A549 (cell line): ENCODE measurements at regions of chr2 and their contacts with region 1.

Region 1: DNA sequence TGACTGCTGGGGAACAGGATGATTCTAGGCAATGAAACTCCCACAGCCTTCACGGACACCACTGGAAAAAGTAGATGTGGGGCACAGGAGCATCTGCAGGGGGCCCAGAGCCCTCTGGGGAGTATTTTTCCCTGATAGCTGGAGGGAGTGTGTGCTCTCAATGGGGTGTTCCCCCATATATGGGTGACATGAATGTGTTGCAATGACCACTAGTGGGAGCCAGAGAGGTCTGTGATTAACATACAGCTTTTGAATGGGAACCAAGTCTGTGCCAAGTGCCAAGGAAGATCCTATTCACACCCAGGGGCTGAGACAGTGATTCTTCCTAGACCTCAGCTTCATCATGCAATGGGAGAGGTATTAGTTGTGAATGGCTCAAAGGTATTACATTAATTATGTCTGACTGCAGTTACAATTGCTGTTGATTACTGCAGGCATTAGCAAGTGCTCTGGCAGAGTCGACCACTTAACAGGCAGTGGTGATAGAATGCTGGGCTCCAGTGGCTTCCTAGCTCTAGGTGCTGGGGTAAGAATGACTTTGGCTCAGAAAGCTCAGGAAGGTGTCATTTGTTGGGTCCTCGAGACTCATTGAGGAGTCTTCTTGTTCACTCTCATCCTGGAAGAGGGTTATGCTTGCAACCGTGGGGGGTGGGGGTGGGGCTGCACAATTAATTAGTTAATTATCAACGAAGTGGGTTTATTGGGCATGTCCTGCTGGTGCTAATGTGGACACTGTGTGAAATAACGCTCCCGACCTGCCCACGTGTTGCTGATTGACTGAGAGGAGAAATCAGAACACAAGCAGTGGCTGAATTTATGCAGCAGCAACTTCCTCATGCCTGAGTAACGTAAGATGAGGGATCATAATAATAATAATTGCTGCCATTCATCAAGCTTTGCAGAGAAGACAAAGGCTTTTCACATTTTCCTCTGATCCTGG is 194.1 kb downstream of the CLIP4 start:
- DNase-seq: peak; percentile 75 to 80
- ATAC-seq: peak; percentile 78 to 95
- H3K4me3 ChIP-seq: no peak overlapping the region
- H3K27ac ChIP-seq: no peak overlapping the region
- H3K4me1 ChIP-seq: 0 out of 3 replicates have a peak, but pooled peaks cover 3% of the 10 kb centered on the region
- CTCF ChIP-seq: peak; percentile 87
- EP300 ChIP-seq: no peak
- POLR2A ChIP-seq: no peak
- RAD21 ChIP-seq: peak; percentile 62 to 65

Region 2: DNA sequence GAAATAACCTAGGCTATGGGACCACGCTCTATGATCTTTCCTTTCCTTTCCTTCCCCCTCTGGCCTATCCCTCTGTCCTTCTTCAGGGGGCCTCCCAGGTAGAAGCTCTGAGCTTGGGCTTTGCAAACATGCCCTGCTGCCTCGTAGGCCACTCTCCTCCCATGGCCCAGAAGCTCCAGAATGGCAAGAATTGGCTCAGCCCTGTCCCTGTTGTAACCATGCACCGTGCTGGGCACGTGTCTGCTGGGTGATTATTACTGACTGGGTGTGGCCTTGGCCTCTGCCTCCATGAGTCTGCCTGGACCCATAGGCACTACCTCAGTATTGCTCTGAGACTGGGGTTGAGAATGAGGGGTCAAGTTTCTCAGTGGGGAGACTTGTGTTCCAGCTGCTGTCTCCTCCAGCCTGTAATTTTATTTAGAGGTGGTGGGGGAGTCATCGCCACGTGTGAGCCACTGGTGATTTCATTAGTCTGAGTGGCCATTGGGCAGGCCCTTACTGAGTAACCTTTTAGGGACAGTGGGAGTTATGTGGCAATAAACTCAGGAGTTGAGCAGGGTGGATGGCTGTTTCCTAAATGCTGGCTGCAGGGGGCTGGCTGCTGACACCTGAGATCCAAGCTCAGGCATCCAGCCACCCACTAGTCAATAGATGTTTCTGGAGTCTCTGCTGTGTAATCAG is 36.2 kb before region 1 on chr2:
- CTCF ChIA-PET with region 1: interaction called, 11 read pairs
- POLR2A ChIA-PET with region 1: no interaction called
- DNase-seq: no peak
- ATAC-seq: no peak
- H3K4me3 ChIP-seq: no peak overlapping the region
- H3K27ac ChIP-seq: no peak overlapping the region
- H3K4me1 ChIP-seq: no peaks in the 10 kb centered on the region
- CTCF ChIP-seq: no peak
- EP300 ChIP-seq: no peak
- POLR2A ChIP-seq: no peak
- RAD21 ChIP-seq: no peak

Region 3: GRCh38 chr2:29290293-29291047 is 18.9 kb before region 1 on chr2:
- CTCF ChIA-PET with region 1: interaction called, 38 read pairs
- POLR2A ChIA-PET with region 1: no interaction called
- DNase-seq: no peak
- ATAC-seq: peak in 1 of 2 experiments; percentile 23; a peak in 1 of 6 replicates
- H3K4me3 ChIP-seq: no peak overlapping the region
- H3K27ac ChIP-seq: no peak overlapping the region
- H3K4me1 ChIP-seq: no peaks in the 10 kb centered on the region
- CTCF ChIP-seq: no peak
- EP300 ChIP-seq: no peak
- POLR2A ChIP-seq: no peak
- RAD21 ChIP-seq: no peak

Region 4: DNA sequence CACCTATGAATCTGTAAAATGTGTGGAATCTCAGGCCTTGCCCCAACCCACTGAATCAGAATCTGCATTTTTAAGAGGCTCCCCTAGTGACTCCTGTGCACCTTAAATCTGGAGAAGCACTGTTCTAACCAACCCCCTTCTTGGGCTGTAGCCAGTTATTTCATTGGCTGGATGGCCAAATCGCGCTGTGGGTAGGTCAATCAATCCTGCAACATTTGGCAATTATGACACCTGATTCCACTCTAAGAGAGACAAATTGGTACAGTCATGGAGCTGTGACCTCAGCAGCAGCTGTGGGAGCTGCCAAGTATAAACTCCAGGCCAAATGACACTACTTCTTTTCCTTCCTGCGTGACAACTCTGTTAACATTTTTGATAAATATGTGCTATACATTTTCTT is 14.6 kb after region 1 on chr2:
- CTCF ChIA-PET with region 1: interaction called, 40 read pairs
- POLR2A ChIA-PET with region 1: no interaction called
- DNase-seq: no peak
- ATAC-seq: no peak
- H3K4me3 ChIP-seq: no peak overlapping the region
- H3K27ac ChIP-seq: no peak overlapping the region
- H3K4me1 ChIP-seq: no peaks in the 10 kb centered on the region
- CTCF ChIP-seq: no peak
- EP300 ChIP-seq: no peak
- POLR2A ChIP-seq: no peak
- RAD21 ChIP-seq: no peak

Region 5: DNA sequence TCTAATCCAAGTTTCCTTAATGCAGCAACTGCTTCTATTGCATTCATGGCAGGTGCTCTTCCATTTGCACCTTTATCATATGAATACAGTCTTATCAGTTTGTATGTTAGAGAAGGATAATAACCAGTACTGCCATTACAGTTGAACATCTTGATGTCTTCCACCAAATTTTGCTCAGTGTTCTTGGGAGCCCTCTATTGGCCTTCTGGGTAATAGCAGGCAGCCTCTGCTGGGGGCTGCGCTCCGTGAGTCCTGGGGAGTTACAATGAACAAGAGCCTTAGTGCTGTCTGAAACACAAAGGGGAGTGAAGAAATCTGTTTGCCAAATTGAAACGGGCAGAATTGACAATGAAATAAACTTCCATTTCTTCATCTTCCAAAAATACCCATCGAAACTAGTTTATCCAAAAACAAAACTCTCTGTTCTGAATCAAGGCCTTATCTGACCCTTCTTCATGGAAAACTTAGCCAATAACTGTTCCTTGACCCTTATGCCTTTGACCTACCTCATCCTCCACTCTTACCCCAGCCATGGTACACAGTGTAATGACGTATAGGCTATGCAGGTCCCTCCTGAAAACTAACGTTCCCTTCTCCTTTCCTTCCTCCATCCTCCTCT is 532.1 kb after region 1 on chr2:
- CTCF ChIA-PET with region 1: interaction called, 22 read pairs
- POLR2A ChIA-PET with region 1: no interaction called
- DNase-seq: peak; percentile 21 to 35
- ATAC-seq: peak; percentile 74 to 88; a peak in 5 of 6 replicates
- H3K4me3 ChIP-seq: no peak overlapping the region
- H3K27ac ChIP-seq: no peak overlapping the region
- H3K4me1 ChIP-seq: no peaks in the 10 kb centered on the region
- CTCF ChIP-seq: peak; percentile 83
- EP300 ChIP-seq: no peak
- POLR2A ChIP-seq: no peak
- RAD21 ChIP-seq: peak; percentile 85

Region 6: GRCh38 chr2:30072250-30072842 is 763.0 kb after region 1 on chr2:
- CTCF ChIA-PET with region 1: interaction called, 15 read pairs
- POLR2A ChIA-PET with region 1: no interaction called
- DNase-seq: peak; percentile 58 to 74
- ATAC-seq: peak; percentile 97 to 99
- H3K4me3 ChIP-seq: no peak overlapping the region
- H3K27ac ChIP-seq: no peak overlapping the region
- H3K4me1 ChIP-seq: no peaks in the 10 kb centered on the region
- CTCF ChIP-seq: peak; percentile 73
- EP300 ChIP-seq: no peak
- POLR2A ChIP-seq: no peak
- RAD21 ChIP-seq: peak; percentile 78 to 86